ENCODE measurements at regions of chr11 and their contacts with region 1.

Region 1: DNA sequence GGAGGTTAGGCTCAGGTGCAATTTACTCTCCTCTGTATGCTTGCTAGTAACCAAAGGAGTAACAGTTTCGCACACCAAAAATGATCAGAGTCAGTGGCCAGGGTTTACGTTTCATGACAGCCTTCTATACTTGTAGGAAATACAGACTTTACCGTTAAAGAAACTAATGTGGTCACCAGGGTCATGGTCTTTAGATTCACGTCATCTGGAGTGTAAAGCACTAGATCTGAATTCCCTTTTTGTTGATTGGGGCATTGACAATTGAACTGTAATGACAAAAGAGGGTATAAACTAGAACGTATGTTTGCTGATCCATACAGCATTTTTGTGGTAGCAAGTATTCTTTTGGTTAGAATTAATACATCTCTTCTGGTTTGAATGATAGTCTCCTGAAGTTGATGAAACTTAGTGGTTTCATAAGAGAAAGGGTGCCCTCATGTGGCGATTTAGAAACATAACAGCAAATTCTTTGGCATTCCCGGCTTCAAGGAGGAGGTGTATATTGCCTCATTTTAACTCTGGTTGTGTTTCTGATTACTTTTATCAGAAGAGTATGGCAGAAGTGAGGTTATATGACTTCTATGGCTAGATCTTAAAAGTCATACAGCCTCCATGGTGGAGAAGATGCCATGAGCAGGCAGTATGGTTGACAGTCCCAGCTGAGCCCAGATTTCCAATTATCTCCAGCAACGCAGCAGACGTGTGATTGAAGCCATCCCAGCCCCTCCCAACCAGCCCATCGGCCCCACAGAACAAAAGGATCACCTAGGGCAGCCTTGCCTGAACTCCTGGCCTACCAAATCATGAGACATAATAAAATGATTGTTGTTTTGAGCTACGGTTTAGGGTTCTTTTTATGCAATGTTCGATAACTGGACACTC is 35.1 kb downstream of the MMP7 start:
- DNase-seq: peak in 7 of 9 experiments; percentile 24 to 89 (median 39)
- ATAC-seq: peak; percentile 94
- H3K4me3 ChIP-seq: no peak overlapping the region
- H3K4me3 Mint-ChIP-seq: peak overlapping the region; percentile 43
- H3K27ac ChIP-seq: no peak overlapping the region
- H3K27ac Mint-ChIP-seq: peak overlapping the region; percentile 16
- H3K4me1 ChIP-seq: peaks cover 4% of the 10 kb centered on the region
- H3K4me1 Mint-ChIP-seq: peaks cover 14% of the 10 kb centered on the region
- H3K27me3 ChIP-seq: peaks cover 0 to 4% of the 10 kb centered on the region in 2 experiments
- H3K27me3 Mint-ChIP-seq: peaks cover 3% of the 10 kb centered on the region
- CTCF ChIP-seq: peak; percentile 87

Region 2: DNA sequence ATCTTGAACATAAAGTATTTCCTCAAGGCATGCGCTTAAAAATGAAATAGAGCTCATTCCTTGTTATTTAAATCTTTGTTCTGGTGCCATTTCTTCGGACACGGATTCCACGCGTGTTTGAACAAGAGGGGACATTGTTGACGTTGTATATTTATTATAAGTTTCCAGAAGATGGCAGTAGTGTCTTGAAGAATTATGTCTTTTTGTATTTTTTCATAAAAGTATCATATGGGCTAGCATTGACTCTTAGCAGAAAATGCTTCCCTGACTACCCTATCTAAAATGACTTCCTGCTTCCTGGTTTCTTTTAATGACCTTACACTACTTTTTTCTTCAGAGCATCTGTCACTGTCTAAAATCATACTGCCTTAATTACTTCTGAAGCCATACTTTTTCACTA is 128.0 kb before region 1 on chr11:
- CTCF ChIA-PET with region 1: interaction called, 39 read pairs
- POLR2A ChIA-PET with region 1: no interaction called
- intact Hi-C with region 1: loop called (anchors 1 kb)
- DNase-seq: peak in 2 of 9 experiments; percentile 41 to 61
- ATAC-seq: peak; percentile 77
- H3K4me3 ChIP-seq: no peak overlapping the region
- H3K4me3 Mint-ChIP-seq: no peak overlapping the region
- H3K27ac ChIP-seq: no peak overlapping the region
- H3K27ac Mint-ChIP-seq: peak overlapping the region; percentile 66
- H3K4me1 ChIP-seq: peaks cover 22% of the 10 kb centered on the region
- H3K4me1 Mint-ChIP-seq: peaks cover 42% of the 10 kb centered on the region
- H3K27me3 ChIP-seq: no peaks in the 10 kb centered on the region
- H3K27me3 Mint-ChIP-seq: no peaks in the 10 kb centered on the region
- CTCF ChIP-seq: peak; percentile 70

Region 3: DNA sequence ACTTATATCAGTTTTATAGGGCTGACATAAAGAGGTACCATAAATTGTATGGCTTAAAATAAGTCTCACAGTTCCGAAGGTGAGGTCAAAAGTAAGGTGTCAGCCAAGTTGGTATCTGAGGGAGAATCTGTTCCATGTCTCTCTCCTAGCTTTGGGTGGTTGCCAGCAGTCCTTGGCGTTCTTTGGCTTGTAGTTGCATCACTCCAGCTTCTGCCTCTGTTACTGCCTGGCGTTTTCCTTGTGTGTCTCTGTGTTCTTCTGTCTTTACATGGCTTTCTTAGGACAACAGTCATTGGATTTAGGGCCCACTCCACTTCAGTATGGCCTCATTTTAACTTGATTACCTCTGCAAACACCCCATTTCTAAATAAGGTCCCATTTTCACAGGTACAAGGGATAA is 18.5 kb after region 1 on chr11:
- CTCF ChIA-PET with region 1: interaction called, 11 read pairs
- POLR2A ChIA-PET with region 1: interaction called, 3 read pairs
- intact Hi-C with region 1: no loop called
- DNase-seq: no peak
- ATAC-seq: no peak
- H3K4me3 ChIP-seq: no peak overlapping the region
- H3K4me3 Mint-ChIP-seq: no peak overlapping the region
- H3K27ac ChIP-seq: no peak overlapping the region
- H3K27ac Mint-ChIP-seq: no peak overlapping the region
- H3K4me1 ChIP-seq: no peaks in the 10 kb centered on the region
- H3K4me1 Mint-ChIP-seq: no peaks in the 10 kb centered on the region
- H3K27me3 ChIP-seq: no peaks in the 10 kb centered on the region
- H3K27me3 Mint-ChIP-seq: no peaks in the 10 kb centered on the region
- CTCF ChIP-seq: no peak

Region 4: GRCh38 chr11:102614485-102614884 is 119.1 kb after region 1 on chr11:
- CTCF ChIA-PET with region 1: interaction called, 15 read pairs
- POLR2A ChIA-PET with region 1: no interaction called
- intact Hi-C with region 1: loop called (anchors 2 to 5 kb)
- DNase-seq: peak in 1 of 9 experiments; percentile 9
- ATAC-seq: no peak
- H3K4me3 ChIP-seq: no peak overlapping the region
- H3K4me3 Mint-ChIP-seq: no peak overlapping the region
- H3K27ac ChIP-seq: no peak overlapping the region
- H3K27ac Mint-ChIP-seq: no peak overlapping the region
- H3K4me1 ChIP-seq: no peaks in the 10 kb centered on the region
- H3K4me1 Mint-ChIP-seq: peaks cover 3% of the 10 kb centered on the region
- H3K27me3 ChIP-seq: no peaks in the 10 kb centered on the region
- H3K27me3 Mint-ChIP-seq: no peaks in the 10 kb centered on the region
- CTCF ChIP-seq: no peak

Region 5: DNA sequence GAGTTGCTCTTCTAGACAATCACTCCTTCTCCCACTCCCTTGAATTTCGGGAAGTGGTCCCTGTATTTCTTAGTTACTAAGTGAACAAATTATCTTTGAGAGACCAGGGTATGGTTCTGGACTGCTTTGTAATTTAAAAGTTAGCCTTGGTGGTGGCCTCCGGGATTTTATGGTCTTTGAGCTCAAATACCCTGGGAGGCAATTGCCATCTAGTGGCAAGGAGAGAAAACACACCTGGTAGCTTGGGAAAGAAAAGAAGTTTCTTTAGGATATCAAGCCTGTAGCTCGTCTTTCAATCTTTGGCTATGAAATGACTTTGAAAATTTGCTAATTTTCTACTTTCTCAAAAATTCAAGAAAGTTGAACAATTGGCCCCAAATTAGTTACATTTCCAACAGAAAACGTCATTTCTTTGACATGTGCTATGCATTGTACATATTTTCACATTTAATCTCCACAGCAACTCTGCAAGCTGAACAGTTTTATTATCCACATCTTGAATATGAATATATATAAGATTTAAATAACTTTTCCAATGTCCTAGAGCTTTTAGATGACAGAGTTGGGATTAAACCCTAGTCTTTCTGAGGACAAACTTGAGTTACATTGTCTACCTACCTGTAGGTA is 171.0 kb after region 1 on chr11:
- CTCF ChIA-PET with region 1: interaction called, 7 read pairs
- POLR2A ChIA-PET with region 1: no interaction called
- intact Hi-C with region 1: loop called in 1 of 2 experiments (anchors 1 kb)
- DNase-seq: peak in 4 of 9 experiments; percentile 13 to 54 (median 26)
- ATAC-seq: no peak
- H3K4me3 ChIP-seq: no peak overlapping the region
- H3K4me3 Mint-ChIP-seq: no peak overlapping the region
- H3K27ac ChIP-seq: no peak overlapping the region
- H3K27ac Mint-ChIP-seq: no peak overlapping the region
- H3K4me1 ChIP-seq: no peaks in the 10 kb centered on the region
- H3K4me1 Mint-ChIP-seq: no peaks in the 10 kb centered on the region
- H3K27me3 ChIP-seq: no peaks in the 10 kb centered on the region
- H3K27me3 Mint-ChIP-seq: peaks cover 4% of the 10 kb centered on the region
- CTCF ChIP-seq: peak; percentile 65

Region 6: GRCh38 chr11:102703826-102704493 is 208.6 kb after region 1 on chr11:
- CTCF ChIA-PET with region 1: no interaction called
- POLR2A ChIA-PET with region 1: no interaction called
- intact Hi-C with region 1: no loop called
- DNase-seq: no peak
- ATAC-seq: no peak
- H3K4me3 ChIP-seq: no peak overlapping the region
- H3K4me3 Mint-ChIP-seq: no peak overlapping the region
- H3K27ac ChIP-seq: no peak overlapping the region
- H3K27ac Mint-ChIP-seq: no peak overlapping the region
- H3K4me1 ChIP-seq: no peaks in the 10 kb centered on the region
- H3K4me1 Mint-ChIP-seq: no peaks in the 10 kb centered on the region
- H3K27me3 ChIP-seq: no peaks in the 10 kb centered on the region
- H3K27me3 Mint-ChIP-seq: peaks cover 12% of the 10 kb centered on the region
- CTCF ChIP-seq: no peak